ENCODE measurements at regions of chr4 and their contacts with region 1.

Region 1: GRCh38 chr4:142126890-142127497 is 490.6 kb downstream of the IL15 start:
- DNase-seq: peak; percentile 81
- H3K4me3 Mint-ChIP-seq: no peak overlapping the region
- H3K27ac Mint-ChIP-seq: no peak overlapping the region
- H3K4me1 Mint-ChIP-seq: peaks cover 37% of the 10 kb centered on the region
- H3K27me3 Mint-ChIP-seq: no peaks in the 10 kb centered on the region

Region 2: DNA sequence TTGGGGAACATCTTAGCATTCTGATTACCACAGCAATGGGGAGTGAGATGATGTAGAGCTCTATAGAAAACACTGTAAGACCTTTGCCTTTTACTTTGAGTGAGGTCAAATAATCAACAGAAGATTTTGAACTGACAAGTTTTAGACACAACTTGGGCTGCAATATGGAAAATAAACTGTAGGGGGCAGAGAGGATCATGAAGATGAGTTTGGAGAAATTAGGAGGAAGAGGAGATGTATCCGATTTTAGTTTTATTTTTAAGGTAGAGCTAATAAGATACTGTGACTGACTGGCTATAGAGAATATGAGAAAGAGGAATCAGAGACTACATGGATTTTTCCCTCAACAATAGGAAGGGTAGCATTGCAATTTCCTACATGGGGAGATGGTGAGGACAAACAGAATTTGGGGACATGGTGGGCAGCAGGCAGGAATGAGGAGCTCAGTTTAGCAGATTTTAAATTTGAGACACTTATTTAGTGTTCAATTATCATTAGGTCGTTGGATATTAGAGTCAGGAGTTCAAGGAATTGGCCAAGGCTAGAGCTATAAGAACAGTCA is 156.0 kb after region 1 on chr4:
- CTCF ChIA-PET with region 1: interaction called, 3 read pairs
- intact Hi-C with region 1: loop called (anchors 5 kb)
- DNase-seq: peak; percentile 60
- H3K4me3 Mint-ChIP-seq: no peak overlapping the region
- H3K27ac Mint-ChIP-seq: no peak overlapping the region
- H3K4me1 Mint-ChIP-seq: peaks cover 29% of the 10 kb centered on the region
- H3K27me3 Mint-ChIP-seq: no peaks in the 10 kb centered on the region

Region 3: DNA sequence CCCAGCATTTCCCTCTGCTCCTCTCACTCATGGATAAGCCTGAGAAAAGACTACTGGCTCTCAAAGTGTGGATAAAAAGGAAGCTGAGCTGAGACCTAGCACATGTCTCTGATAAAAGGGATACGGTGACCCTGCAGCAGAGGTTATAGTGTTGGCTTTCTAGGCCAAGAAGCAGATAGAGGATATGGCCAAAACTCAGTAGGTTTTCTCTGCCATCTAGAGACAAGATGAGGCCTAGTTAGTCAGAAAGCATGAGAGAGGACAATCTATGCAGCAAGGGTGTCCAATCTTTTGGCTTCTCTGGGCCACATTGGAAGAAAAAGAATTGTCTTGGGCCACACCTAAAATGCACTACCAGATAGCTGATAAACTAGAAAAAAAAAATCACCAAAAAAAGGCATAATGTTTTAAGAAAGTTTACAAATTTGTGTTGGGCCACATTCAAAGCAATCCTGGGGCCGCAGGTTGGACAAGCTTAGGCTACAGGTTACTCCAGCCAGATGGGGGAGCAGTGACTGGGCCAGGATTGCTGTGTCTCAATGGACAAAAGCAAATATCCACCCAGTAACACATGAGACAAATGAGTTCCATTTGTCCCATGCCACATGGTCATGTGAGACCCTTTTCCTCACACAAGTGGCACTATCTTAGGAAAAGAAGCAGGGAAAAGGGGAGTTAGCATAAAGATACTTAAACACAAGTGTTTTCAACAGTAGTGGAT is 307.7 kb after region 1 on chr4:
- CTCF ChIA-PET with region 1: no interaction called
- intact Hi-C with region 1: loop called (anchors 1 kb)
- DNase-seq: no peak
- H3K4me3 Mint-ChIP-seq: no peak overlapping the region
- H3K27ac Mint-ChIP-seq: no peak overlapping the region
- H3K4me1 Mint-ChIP-seq: peaks cover 40% of the 10 kb centered on the region
- H3K27me3 Mint-ChIP-seq: no peaks in the 10 kb centered on the region

Region 4: DNA sequence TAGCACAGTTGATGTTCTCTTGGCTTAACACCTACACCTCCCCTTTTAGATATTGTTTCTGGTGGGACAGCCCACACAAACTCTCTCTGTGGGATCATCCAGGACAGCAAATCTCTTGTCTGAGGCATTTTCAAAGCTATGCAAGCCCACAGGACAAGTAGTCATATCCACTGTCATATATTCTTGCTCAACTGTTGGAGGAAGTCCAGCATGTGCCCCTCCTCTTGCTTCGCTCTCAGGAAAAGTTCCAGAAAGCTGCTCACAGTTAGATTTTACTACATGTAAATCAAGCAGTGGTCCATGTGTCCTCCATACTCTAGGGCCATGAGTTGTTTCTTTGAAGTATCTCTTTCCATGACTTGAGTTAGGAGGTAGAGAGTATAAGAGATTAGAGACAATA is 458.4 kb after region 1 on chr4:
- CTCF ChIA-PET with region 1: no interaction called
- intact Hi-C with region 1: loop called (anchors 5 kb)
- DNase-seq: no peak
- H3K4me3 Mint-ChIP-seq: no peak overlapping the region
- H3K27ac Mint-ChIP-seq: peak overlapping the region; percentile 4
- H3K4me1 Mint-ChIP-seq: peaks cover 68% of the 10 kb centered on the region
- H3K27me3 Mint-ChIP-seq: no peaks in the 10 kb centered on the region

Region 5: GRCh38 chr4:142663829-142664228 is 536.8 kb after region 1 on chr4:
- CTCF ChIA-PET with region 1: no interaction called
- intact Hi-C with region 1: no loop called
- DNase-seq: no peak
- H3K4me3 Mint-ChIP-seq: no peak overlapping the region
- H3K27ac Mint-ChIP-seq: no peak overlapping the region
- H3K4me1 Mint-ChIP-seq: no peaks in the 10 kb centered on the region
- H3K27me3 Mint-ChIP-seq: no peaks in the 10 kb centered on the region

Region 6: GRCh38 chr4:142840516-142841123 is 713.6 kb after region 1 on chr4:
- CTCF ChIA-PET with region 1: interaction called, 3 read pairs
- intact Hi-C with region 1: loop called (anchors 1 kb)
- DNase-seq: no peak
- H3K4me3 Mint-ChIP-seq: no peak overlapping the region
- H3K27ac Mint-ChIP-seq: no peak overlapping the region
- H3K4me1 Mint-ChIP-seq: peaks cover 31% of the 10 kb centered on the region
- H3K27me3 Mint-ChIP-seq: no peaks in the 10 kb centered on the region

Region 7: DNA sequence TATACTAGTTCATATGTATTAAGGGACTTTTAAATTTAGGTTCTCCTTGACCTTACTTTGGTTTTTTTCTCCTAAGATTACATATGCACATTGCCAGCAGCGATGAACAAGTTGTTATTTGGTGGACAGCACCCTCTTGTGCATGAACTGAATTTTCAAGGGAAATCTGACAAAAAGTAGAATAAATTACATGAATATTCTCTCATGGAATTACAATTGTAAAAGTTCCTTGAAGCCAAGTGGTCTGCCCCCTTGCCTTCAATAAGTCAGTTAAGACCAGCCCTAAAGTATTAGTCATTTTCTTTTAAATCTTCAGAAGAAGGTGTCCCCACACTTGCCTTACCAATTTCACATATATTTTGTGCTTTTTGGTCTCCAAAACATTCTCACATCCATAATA is 1355.8 kb after region 1 on chr4:
- CTCF ChIA-PET with region 1: no interaction called
- intact Hi-C with region 1: loop called (anchors 10 kb)
- DNase-seq: peak; percentile 28
- H3K4me3 Mint-ChIP-seq: no peak overlapping the region
- H3K27ac Mint-ChIP-seq: no peak overlapping the region
- H3K4me1 Mint-ChIP-seq: no peaks in the 10 kb centered on the region
- H3K27me3 Mint-ChIP-seq: peaks cover 4% of the 10 kb centered on the region

Measured in activated naive CD4-positive, alpha-beta T cell treated with anti-CD3 and anti-CD28 coated beads for 36 hours (primary cell).